ENCODE measurements at regions of chr2 and their contacts with region 1.

Region 1: DNA sequence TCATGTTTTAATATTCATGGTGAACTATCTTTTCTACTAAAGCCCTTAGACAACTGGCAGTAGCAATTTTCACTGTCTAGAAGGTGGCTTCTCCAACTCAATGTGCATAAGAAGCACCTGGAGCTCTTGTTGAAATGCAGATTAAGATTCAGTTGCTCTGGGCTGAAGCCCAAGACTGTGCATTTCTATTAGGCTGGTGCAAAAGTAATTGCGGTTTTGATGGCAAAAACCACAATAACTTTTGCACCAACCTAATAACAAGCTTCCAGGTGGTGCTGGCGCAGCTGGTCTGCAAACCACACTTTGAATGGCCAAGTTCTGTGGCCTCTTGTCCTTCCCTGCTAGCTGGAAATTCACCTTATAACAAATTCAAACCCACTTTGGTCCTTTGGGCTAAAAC is 26.7 kb upstream of the VPS54 start:
- DNase-seq: no peak
- ATAC-seq: no peak

Region 2: DNA sequence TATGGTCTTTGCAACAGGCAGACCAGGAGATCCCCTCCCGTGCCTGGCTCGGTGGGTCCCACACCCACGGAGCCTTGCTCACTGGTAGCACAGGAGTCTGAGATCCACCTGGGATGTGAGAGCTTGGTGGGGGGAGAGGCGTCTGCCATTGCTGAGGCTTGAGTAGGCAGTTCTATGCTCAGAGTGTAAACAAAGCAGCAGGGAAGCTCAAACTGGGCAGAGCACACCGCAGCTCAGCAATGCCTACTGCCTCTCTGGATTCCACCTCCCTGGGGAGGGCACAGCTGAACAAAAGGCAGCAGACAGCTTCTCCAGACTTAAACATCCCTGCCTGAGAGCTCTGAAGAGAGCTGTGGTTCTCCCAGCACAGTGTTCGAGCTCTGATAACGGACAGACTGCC is 119.1 kb before region 1 on chr2:
- intact Hi-C with region 1: no loop called
- DNase-seq: no peak
- ATAC-seq: no peak

Region 3: DNA sequence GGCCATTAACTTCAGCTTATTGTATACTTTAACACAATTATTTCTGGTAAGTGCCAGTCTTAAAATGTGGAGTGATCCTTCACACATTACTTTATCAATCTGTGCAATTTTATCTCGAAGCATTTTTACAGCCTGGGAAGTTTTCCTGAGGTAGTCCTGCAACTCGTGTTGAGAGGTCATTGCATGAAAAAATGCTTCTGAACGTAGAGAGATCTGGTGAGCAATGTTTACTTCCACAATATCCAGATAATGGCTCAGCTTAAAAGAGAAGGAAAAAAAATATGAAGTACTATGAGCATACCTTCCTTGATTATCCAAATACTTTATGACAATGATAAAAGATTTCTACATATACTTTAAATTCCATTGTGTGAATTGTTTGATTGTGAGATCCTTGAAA is 83.8 kb before region 1 on chr2:
- intact Hi-C with region 1: no loop called
- DNase-seq: no peak
- ATAC-seq: no peak

Region 4: DNA sequence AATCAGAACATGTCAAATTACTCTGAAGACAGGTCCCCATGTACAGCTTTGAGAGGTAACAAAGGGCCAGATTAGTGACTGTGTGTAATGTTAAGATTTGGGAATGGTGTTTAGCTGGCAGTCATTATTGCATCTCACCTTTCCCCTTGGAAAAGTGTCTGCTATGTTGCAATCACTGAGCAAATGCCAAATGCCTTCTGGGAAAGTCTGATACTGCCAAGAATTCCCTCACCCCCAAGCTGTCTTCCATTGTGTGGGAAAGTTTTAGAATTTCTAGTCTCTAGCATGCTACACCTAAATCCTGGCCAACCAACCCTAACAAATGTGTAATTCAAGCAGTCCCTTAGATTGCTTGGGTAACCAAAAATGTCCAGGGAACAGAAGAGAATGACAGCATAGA is 111.9 kb after region 1 on chr2:
- intact Hi-C with region 1: no loop called
- DNase-seq: no peak
- ATAC-seq: peak; percentile 49

Region 5: DNA sequence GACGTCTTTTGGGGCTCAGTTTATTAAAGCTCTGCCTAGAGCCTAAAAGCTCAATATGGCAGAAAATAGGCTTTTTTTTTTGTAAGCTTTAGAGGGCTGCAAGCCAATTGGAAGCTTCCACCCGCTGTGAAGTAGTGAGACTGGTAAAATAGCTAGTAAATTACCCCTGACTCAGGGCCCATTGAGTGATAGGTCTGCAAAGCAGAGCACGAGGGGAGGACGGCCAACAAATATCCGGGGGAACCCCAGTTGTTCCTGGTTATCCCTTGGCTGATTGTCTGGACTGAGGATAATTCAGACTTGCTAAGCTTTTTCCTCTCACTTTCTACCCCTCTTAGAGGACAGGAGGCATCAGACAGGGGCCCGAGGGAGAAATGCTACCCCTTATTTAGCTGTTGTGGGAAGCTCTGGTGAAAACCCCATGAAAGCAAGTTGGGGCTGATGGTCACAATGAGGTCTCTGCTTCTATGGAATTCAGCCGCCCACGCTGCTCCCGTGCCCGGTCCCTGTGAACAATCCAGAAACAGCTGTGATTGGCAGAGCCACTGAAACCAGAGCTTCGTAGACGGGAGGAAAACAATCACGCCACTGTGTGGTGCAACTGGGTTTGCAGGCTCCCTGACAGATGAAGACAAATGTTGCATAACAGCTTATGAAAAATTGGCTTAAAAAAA is 266.1 kb after region 1 on chr2:
- intact Hi-C with region 1: loop called in 1 of 2 experiments (anchors 5 kb)
- DNase-seq: peak; percentile 73 to 75
- ATAC-seq: peak; percentile 99

Region 6: DNA sequence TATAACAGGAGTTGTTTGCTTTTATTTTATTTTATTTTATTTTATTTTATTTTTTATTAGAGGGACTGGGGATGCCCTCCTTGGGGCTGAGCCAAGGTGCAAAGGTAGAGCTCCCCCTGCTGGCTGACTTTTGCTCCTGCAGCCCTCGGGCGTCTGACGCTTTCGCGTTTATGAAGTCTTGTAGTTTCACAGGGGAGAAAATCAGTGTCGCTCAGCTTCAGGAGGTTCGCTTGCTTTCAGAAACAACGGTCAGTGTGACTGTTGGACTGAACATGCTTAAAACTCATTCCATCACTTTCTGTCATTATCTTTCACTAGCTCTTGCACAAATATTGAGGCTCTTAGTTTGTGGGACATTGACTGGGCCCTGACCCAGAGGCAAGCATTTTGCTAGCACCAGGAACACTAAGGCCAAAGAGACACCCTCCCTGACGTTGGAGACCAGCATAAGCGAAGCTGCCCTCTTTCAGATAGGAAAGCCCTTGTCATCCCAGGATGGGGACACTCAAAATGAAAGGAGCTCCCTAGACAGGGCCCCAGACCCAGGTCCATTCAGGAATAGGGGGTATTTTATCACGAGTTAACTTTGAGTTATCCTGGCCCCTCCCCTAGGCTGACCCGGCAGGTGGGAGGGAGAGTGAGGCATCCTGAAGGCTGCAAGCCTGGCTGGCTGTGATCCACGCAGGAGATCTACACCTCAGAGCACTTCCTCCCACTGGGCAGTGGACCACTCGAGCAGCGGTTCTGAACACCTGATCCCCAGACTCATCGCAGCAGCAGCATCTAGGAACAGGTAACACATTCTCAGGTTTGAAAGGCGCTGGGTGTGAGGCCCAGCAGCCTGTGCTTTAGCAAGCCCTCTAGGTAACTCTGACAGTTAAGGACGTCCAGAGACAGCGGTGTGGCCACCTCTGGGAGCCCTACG is 442.4 kb after region 1 on chr2:
- intact Hi-C with region 1: loop called in 1 of 2 experiments (anchors 5 kb)
- DNase-seq: peak in 1 of 2 donors; percentile 79
- ATAC-seq: peak; percentile 81